CD4-positive, alpha-beta memory T cell (primary cell): ENCODE measurements at regions of chr7 and their contacts with region 1.

Region 1: DNA sequence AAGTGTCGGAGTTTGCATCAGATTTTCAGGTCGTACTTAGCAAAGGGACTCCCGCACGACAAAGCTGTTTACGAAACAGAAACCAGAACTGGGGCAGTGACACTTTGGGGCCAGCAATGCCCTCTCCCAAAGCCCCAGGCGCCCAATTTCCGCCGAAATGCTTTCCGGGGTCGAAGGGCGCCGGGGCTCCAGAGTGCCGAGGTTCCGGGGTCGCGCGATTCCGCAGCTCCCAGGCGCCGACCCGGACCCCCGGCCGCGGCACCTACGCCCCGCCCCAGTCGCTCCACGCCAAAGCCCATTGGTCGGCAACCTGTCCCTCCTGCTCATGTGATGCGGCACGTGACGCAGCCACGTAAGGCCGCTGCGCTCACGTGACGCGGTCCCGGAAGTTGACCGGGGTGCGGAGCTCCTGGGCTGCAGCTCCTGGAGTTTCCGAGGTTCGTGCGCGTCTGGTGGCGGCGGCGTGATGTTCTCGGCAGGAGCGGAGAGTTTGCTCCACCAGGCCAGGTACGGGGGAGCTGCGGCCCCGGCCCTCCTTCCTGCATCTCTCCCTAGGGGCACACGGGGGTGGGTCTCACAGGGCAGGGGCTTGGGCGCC is at the start of gene AP5Z1:
- DNase-seq: peak; percentile 92 to 97 (median 94)
- H3K4me3 ChIP-seq: peak within 1 kb of the TSS; percentile 92 to 98
- H3K4me3 Mint-ChIP-seq: peak within 1 kb of the TSS; percentile 96 to 100 (median 98)
- H3K27ac ChIP-seq: peak within 1 kb of the TSS; percentile 93
- H3K27ac Mint-ChIP-seq: peak within 1 kb of the TSS; percentile 99 to 100 (median 99)
- H3K4me1 ChIP-seq: peaks cover 31% of the 10 kb centered on the region
- H3K4me1 Mint-ChIP-seq: peaks cover 29 to 50% (median 42%) of the 10 kb centered on the region in 4 donors
- H3K27me3 ChIP-seq: no peaks in the 10 kb centered on the region
- H3K27me3 Mint-ChIP-seq: no peaks in the 10 kb centered on the region
- total RNA-seq, gene AP5Z1: 100 to 103 TPM

Region 2: GRCh38 chr7:4681886-4682620 is 93.3 kb before region 1 on chr7 and contains the start of gene FOXK1:
- CTCF ChIA-PET with region 1: no interaction called
- POLR2A ChIA-PET with region 1: interaction called, 33 read pairs
- intact Hi-C with region 1: loop called (anchors 1 kb)
- DNase-seq: peak; percentile 63 to 82 (median 78)
- H3K4me3 ChIP-seq: peak within 1 kb of the TSS; percentile 59 to 73
- H3K4me3 Mint-ChIP-seq: peak within 1 kb of the TSS; percentile 90 to 100 (median 96)
- H3K27ac ChIP-seq: peak within 1 kb of the TSS; percentile 94
- H3K27ac Mint-ChIP-seq: peak within 1 kb of the TSS; percentile 90 to 98 (median 94)
- H3K4me1 ChIP-seq: peaks cover 32% of the 10 kb centered on the region
- H3K4me1 Mint-ChIP-seq: peaks cover 22 to 37% (median 28%) of the 10 kb centered on the region in 4 donors
- H3K27me3 ChIP-seq: no peaks in the 10 kb centered on the region
- H3K27me3 Mint-ChIP-seq: peaks cover 0 to 2% of the 10 kb centered on the region in 2 donors
- total RNA-seq, gene FOXK1: 52.9 to 53.3 TPM

Region 3: GRCh38 chr7:4753711-4754432 is 21.5 kb before region 1 on chr7:
- CTCF ChIA-PET with region 1: interaction called, 5 read pairs
- POLR2A ChIA-PET with region 1: interaction called, 69 read pairs
- intact Hi-C with region 1: no loop called
- DNase-seq: peak; percentile 77 to 79 (median 78)
- H3K4me3 ChIP-seq: no peak overlapping the region
- H3K4me3 Mint-ChIP-seq: peak overlapping the region in 1 of 8 donors; percentile 29
- H3K27ac ChIP-seq: no peak overlapping the region
- H3K27ac Mint-ChIP-seq: peak overlapping the region in 4 of 7 donors; percentile 22 to 77 (median 35)
- H3K4me1 ChIP-seq: peaks cover 22% of the 10 kb centered on the region
- H3K4me1 Mint-ChIP-seq: peaks cover 11 to 25% (median 15%) of the 10 kb centered on the region in 4 donors
- H3K27me3 ChIP-seq: no peaks in the 10 kb centered on the region
- H3K27me3 Mint-ChIP-seq: no peaks in the 10 kb centered on the region

Region 4: DNA sequence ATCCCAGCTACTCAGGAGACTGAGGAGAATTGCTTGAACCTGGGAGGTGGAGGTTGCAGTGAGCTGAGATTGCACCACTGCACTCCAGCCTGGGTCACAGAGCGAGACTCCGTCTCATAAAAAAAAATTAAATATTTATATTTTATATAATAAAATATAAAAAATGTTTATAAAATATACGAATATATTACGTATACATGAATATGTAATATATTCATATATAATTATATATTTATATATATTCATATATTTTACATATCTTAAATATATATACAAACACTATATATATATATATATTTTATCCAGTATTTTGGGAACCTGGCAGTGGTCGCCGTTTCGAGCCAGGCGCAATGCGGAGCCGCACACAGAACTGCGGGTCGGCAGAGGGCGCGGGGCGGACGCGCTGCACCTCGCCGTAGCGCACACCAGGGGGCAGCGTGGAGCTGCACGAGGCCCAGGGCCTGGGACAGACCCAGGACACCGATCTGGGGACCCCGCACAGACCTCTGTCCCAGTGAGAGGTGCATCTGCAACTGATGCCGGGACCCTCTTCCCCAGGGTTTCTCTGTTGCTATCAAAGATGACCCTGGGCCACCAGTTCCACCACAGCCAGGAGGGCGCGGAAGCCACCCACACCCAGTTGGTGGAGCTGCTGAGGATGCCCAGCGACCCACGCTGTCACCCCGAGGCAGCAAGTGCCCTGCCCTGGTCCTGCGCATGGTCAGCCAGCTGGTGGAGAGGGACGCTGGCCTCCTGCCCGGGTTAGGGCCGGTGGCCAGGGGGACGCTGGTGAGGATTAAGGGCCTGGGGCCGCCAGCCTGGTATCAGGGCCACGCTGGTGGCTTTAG is 22.7 kb after region 1 on chr7:
- CTCF ChIA-PET with region 1: interaction called, 43 read pairs
- POLR2A ChIA-PET with region 1: interaction called, 56 read pairs
- intact Hi-C with region 1: no loop called
- DNase-seq: peak in 4 of 5 donors; percentile 45 to 59 (median 53)
- H3K4me3 ChIP-seq: no peak overlapping the region
- H3K4me3 Mint-ChIP-seq: no peak overlapping the region
- H3K27ac ChIP-seq: no peak overlapping the region
- H3K27ac Mint-ChIP-seq: no peak overlapping the region
- H3K4me1 ChIP-seq: no peaks in the 10 kb centered on the region
- H3K4me1 Mint-ChIP-seq: peaks cover 1 to 12% (median 6%) of the 10 kb centered on the region in 4 donors
- H3K27me3 ChIP-seq: no peaks in the 10 kb centered on the region
- H3K27me3 Mint-ChIP-seq: no peaks in the 10 kb centered on the region

Region 5: DNA sequence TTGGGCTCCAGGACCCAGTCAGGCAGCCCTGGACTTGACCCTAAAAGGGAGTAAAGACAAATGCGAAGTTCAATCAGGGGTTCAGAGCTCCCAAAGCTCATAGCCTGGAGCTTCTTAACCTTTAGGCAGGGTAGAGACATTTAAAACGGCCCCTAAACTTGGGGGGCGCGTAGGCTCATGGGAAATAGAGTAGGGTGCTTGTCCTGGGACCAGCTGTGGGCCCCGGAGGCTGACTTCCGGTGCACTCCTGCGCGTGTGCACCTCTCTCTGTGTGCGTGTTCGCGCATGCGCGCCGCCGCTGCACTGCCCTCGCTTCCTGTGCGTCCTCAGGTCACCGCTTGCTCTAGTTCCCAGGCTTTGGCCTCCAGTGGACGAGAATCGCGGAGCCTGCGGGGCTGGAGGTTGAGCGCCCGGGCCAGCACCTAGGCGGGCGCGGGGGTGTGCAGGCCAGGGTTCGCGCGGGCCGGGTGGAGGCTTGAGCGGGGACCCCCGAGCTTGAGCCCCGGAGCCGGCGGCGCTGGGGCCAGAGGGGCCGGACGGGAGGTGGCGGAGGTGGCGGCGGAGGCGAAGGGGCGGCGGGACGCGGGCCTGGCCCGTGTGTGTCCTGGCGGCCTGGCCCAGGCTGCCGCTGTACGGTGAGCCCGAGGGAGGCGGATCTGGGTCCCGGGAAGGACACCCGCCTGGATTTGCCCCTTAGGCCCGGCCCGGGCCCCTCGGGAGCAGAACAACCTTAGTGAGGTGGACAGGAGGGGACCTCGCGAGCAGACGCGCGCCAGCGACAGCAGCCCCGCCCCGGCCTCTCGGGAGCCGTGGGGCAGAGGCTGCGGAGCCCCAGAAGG is 270.4 kb after region 1 on chr7 and contains the start of gene RBAK:
- CTCF ChIA-PET with region 1: no interaction called
- POLR2A ChIA-PET with region 1: no interaction called
- intact Hi-C with region 1: loop called (anchors 5 kb)
- DNase-seq: peak; percentile 84 to 90 (median 88)
- H3K4me3 ChIP-seq: peak within 1 kb of the TSS in 1 of 2 donors; percentile 83
- H3K4me3 Mint-ChIP-seq: peak within 1 kb of the TSS; percentile 88 to 97 (median 94)
- H3K27ac ChIP-seq: peak within 1 kb of the TSS; percentile 89
- H3K27ac Mint-ChIP-seq: peak within 1 kb of the TSS; percentile 89 to 96 (median 95)
- H3K4me1 ChIP-seq: peaks cover 5% of the 10 kb centered on the region
- H3K4me1 Mint-ChIP-seq: peaks cover 18 to 50% (median 24%) of the 10 kb centered on the region in 4 donors
- H3K27me3 ChIP-seq: no peaks in the 10 kb centered on the region
- H3K27me3 Mint-ChIP-seq: no peaks in the 10 kb centered on the region
- total RNA-seq, gene RBAK: 19.4 to 20.3 TPM

Region 6: GRCh38 chr7:5139998-5140397 is 364.6 kb after region 1 on chr7:
- CTCF ChIA-PET with region 1: no interaction called
- POLR2A ChIA-PET with region 1: no interaction called
- intact Hi-C with region 1: no loop called
- DNase-seq: no peak
- H3K4me3 ChIP-seq: no peak overlapping the region
- H3K4me3 Mint-ChIP-seq: no peak overlapping the region
- H3K27ac ChIP-seq: no peak overlapping the region
- H3K27ac Mint-ChIP-seq: peak overlapping the region in 2 of 7 donors; percentile 53 to 61
- H3K4me1 ChIP-seq: no peaks in the 10 kb centered on the region
- H3K4me1 Mint-ChIP-seq: peaks cover 9 to 20% (median 15%) of the 10 kb centered on the region in 4 donors
- H3K27me3 ChIP-seq: no peaks in the 10 kb centered on the region
- H3K27me3 Mint-ChIP-seq: peaks cover 0 to 8% of the 10 kb centered on the region in 2 donors